Tibial artery (tissue), 4 donors: ENCODE measurements at regions of chr20 and their contacts with region 1.

Region 1: DNA sequence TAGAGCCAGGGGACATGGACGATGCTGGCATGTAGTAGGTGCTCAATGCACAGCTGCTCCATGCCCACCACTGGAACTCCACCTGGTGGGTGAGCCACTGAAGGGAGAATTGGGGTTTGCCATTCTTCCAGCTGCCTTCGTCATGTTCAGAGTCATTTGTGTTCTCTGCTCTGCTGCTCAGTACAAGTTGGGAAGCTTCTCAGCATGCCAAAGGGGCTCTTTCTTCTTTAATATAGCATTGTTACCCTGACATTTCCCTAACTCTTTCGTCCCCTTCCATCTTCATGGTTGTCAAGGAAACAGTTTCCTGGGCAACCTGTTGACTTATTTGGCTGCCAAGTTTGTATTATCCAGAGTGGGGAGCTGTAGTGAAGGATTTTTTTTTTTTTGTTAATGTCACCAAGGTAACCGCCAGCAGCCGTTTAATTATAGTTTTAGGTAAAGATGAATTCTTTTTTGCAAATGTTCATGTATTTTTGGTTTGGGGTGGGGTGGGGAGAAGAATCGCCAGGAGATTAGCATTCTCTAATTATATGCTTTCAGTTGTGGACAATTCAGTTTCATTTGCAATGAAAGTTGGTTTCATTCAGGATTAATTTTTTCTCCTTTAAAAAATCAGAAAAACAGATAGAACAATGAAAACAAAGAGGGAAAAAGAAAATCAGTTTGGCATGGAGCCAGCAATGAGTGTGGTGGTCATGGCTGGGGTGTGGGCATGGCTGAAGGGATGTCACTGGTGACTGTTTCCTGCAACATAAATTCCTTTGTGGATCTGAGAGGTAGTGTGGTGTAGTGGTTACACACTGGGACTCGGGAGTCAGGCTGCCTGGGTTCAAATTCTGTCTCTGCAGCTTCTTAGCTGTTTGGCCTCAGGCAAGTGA is 73.0 kb upstream of the KCNG1 start:
- DNase-seq: no peak
- H3K4me3 ChIP-seq: no peak overlapping the region
- H3K27ac ChIP-seq: no peak overlapping the region
- H3K4me1 ChIP-seq: peaks cover 0 to 5% (median 0%) of the 10 kb centered on the region in 4 donors
- H3K27me3 ChIP-seq: peaks cover 0 to 32% of the 10 kb centered on the region in 2 donors
- CTCF ChIP-seq: no peak

Region 2: GRCh38 chr20:51616060-51616459 is 520.2 kb after region 1 on chr20:
- intact Hi-C with region 1: loop called (anchors 10 kb)
- DNase-seq: no peak
- H3K4me3 ChIP-seq: no peak overlapping the region
- H3K27ac ChIP-seq: no peak overlapping the region
- H3K4me1 ChIP-seq: no peaks in the 10 kb centered on the region
- H3K27me3 ChIP-seq: no peaks in the 10 kb centered on the region
- CTCF ChIP-seq: no peak